Ascending aorta (tissue), 2 donors: ENCODE measurements at regions of chr4 and their contacts with region 1.

Region 1: DNA sequence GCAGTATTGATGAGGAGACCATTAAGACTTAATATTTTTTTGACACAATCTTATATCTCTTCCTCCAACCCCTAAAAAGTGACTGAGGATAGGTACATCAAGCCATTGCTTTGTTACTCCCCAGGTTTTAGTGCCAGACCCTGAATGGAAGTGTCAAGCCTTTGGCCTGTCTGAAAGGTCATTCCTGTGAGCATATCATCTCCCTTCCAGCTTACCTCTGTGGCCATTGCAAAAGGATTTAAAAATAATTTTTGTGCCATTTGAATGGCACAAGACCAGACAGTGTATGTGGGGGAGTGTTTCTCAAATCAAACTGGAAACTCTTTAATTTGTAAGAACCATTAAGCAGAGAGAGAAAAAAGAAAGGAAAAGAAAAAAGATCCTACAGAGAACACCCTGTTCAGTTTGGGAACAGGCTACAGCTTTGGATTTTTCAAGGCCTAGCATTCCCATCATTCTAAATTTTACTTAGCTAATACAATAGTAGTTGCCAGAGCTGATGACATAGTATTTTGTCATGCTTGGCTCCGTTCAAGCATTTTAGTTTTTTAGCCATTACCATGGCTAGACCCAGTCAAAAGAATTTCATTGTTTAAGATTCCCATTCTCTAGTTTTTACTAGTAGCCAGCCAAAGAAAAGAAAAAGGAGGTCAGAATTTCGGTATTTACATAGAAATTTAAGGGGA is 49.6 kb downstream of the HPF1 start:
- DNase-seq: no peak
- H3K4me3 ChIP-seq: no peak overlapping the region
- H3K27ac ChIP-seq: peak overlapping the region; percentile 41 to 62
- H3K4me1 ChIP-seq: peaks cover 0 to 4% of the 10 kb centered on the region in 2 donors
- H3K27me3 ChIP-seq: no peaks in the 10 kb centered on the region
- CTCF ChIP-seq: no peak

Region 2: GRCh38 chr4:169604131-169604900 is 103.8 kb before region 1 on chr4:
- intact Hi-C with region 1: no loop called
- DNase-seq: no peak
- H3K4me3 ChIP-seq: no peak overlapping the region
- H3K27ac ChIP-seq: peak overlapping the region in 1 of 2 donors; percentile 32
- H3K4me1 ChIP-seq: peaks cover 0 to 4% of the 10 kb centered on the region in 2 donors
- H3K27me3 ChIP-seq: no peaks in the 10 kb centered on the region
- CTCF ChIP-seq: no peak

Region 3: DNA sequence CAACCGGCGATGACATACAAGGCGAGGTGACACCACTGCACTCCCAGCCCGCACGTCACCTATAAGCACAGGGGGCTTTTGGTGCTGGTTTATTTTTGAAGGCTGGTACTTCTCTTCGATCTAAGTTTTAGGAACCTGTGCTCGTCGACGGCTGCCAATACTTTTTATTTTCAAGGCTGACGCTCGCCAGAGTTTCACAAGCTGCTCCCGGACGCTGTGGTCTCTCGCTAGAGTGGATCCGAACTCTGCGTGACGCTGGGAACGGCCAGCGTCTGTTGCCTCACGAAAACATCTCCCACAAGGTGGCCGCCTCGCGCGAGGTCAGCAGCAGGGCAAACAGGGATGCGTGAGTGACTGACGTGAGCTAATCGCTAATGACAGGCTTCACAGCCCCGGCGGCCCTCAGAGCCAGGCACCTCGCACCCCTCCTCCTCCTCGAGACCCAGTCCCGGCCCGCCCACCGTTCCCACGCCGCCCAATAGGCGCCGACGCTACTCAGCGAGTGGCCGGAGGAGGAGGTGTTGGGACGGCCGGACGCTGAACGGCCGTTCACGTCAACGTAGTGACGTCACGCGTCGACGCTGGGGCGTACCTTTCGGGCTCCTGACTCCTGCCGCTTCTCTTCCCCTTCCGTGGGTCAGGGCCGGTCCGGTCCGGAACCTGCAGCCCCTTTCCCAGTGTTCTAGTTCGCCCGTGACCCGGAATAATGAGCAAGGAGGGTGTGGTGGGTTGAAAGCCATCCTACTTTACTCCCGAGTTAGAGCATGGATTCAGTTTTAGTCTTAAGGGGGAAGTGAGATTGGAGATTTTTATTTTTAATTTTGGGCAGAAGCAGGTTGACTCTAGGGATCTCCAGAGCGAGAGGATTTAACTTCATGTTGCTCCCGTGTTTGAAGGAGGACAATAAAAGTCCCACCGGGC is 87.9 kb before region 1 on chr4 and contains the start of gene CLCN3:
- intact Hi-C with region 1: loop called (anchors 5 kb)
- DNase-seq: peak; percentile 92 to 98
- H3K4me3 ChIP-seq: peak within 1 kb of the TSS; percentile 65 to 88
- H3K27ac ChIP-seq: peak within 1 kb of the TSS; percentile 90 to 92
- H3K4me1 ChIP-seq: peaks cover 0 to 5% of the 10 kb centered on the region in 2 donors
- H3K27me3 ChIP-seq: no peaks in the 10 kb centered on the region
- CTCF ChIP-seq: peak in 2 of 3 experiments; percentile 9 to 22
- total RNA-seq, gene CLCN3: 13.8 TPM

Region 4: DNA sequence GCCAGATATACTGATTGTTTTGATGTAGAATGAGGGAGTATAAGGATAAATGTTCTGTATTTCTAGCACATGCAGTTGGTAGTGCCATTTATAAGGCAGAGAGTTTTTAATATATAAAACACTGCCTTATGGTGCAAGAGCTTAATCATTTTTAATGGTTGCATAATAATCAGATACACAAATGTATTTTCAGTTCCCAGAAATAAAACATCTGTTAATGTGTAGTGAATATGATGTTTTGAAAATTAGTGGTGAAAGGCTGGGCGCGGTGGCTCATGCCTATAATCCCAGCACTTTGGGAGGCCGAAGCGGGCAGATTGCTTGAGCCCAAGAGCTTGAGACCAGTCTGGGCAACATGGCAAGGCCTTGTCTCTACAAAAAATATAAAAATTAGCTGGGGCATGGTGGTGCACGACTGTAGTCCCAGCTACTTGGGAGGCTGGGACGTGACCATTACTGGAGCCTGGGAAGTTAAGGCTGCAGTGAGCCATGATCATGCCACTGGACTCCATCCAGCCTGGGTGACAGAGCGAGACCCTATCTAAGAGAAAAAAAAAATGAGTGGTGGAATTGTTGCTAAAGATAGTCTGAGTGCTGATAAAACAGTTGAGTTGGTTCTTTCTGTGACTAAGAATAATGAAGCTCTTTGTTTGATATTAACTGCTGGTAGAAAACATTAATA is 58.4 kb before region 1 on chr4:
- intact Hi-C with region 1: loop called (anchors 5 kb)
- DNase-seq: no peak
- H3K4me3 ChIP-seq: no peak overlapping the region
- H3K27ac ChIP-seq: peak overlapping the region in 1 of 2 donors; percentile 3
- H3K4me1 ChIP-seq: peaks cover 0 to 4% of the 10 kb centered on the region in 2 donors
- H3K27me3 ChIP-seq: no peaks in the 10 kb centered on the region
- CTCF ChIP-seq: no peak

Region 5: DNA sequence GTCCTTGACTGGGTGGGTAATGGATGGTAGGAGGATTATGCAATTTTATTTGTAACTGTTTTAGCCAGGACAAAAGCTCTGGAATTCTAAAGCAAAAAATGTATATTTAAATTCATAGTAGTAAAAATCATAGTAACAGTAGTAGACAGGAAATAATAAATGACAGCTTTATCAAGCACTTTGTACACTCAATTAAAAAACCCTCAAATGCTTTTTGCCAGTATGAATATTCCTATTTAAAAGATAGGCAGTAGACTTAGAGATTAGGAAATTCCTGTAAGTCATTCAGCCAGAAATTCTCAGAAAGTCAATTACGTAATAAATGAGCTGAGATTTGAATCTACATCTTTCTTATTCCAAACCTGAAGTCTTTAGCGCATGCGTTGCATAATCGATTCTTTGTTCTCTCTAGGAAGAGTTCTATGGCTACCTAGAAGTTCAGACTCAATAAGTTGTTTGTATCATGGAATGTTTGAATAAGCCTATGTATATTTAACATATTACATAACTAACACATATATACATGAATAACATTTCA is 379.1 kb after region 1 on chr4:
- intact Hi-C with region 1: no loop called
- DNase-seq: no peak
- H3K4me3 ChIP-seq: no peak overlapping the region
- H3K27ac ChIP-seq: no peak overlapping the region
- H3K4me1 ChIP-seq: peaks cover 0 to 4% of the 10 kb centered on the region in 2 donors
- H3K27me3 ChIP-seq: no peaks in the 10 kb centered on the region
- CTCF ChIP-seq: no peak